SK-N-SH (cell line): ENCODE measurements at regions of chr6 and their contacts with region 1.

Region 1: DNA sequence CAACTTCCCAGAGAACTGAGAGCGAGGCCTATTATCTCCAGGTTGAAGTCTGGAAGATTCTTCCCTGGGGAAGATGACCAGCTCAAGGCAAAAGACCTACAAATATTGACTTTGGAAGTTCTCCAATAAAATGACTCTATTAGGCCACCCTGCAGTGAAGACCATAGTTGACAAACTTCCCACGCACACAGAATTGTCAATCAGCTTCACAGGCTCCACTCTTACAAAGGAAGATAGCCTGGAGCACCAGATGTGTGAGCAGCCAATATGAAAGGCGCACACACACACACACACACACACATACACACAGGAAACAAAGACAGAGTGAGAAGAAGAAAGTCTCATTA is 113.8 kb downstream of the FAM50B start:
- DNase-seq: no peak
- H3K4me3 ChIP-seq: no peak overlapping the region
- H3K27ac ChIP-seq: no peak overlapping the region
- H3K4me1 ChIP-seq: peaks cover 0 to 14% of the 10 kb centered on the region in 2 experiments; a peak in 1 of 4 replicates
- H3K27me3 ChIP-seq: no peaks in the 10 kb centered on the region
- CTCF ChIP-seq: no peak
- EP300 ChIP-seq: no peak
- RAD21 ChIP-seq: no peak

Region 2: GRCh38 chr6:3929281-3929798 is 33.6 kb before region 1 on chr6:
- CTCF ChIA-PET with region 1: interaction called, 10 read pairs
- POLR2A ChIA-PET with region 1: no interaction called
- DNase-seq: no peak
- H3K4me3 ChIP-seq: no peak overlapping the region
- H3K27ac ChIP-seq: peak overlapping the region; percentile 58 to 84; a peak in 3 of 4 replicates
- H3K4me1 ChIP-seq: peaks cover 2 to 14% of the 10 kb centered on the region in 2 experiments; a peak in 2 of 4 replicates
- H3K27me3 ChIP-seq: no peaks in the 10 kb centered on the region
- CTCF ChIP-seq: no peak
- EP300 ChIP-seq: peak in 1 of 2 experiments; percentile 87; a peak in 2 of 4 replicates
- RAD21 ChIP-seq: no peak